Body of pancreas (tissue), 4 donors: ENCODE measurements at regions of chr16 and their contacts with region 1.

Region 1: GRCh38 chr16:3112058-3112880 is at the start of gene ZNF205:
- DNase-seq: peak; percentile 83 to 86 (median 86)
- ATAC-seq: peak; percentile 95
- H3K4me3 ChIP-seq: peak within 1 kb of the TSS; percentile 51 to 68
- H3K27ac ChIP-seq: peak within 1 kb of the TSS in 3 of 4 donors; percentile 38 to 69 (median 56)
- H3K4me1 ChIP-seq: peaks cover 31% of the 10 kb centered on the region
- H3K27me3 ChIP-seq: no peaks in the 10 kb centered on the region
- CTCF ChIP-seq: peak in 3 of 7 experiments; percentile 3 to 8 (median 8)
- POLR2A ChIP-seq: peak in 2 of 3 donors; percentile 30 to 48
- total RNA-seq, gene ZNF205: 14.2 to 20.0 TPM

Region 2: GRCh38 chr16:2926650-2927646 is 185.3 kb before region 1 on chr16:
- intact Hi-C with region 1: no loop called
- DNase-seq: peak; percentile 89 to 94 (median 90)
- ATAC-seq: peak; percentile 96
- H3K4me3 ChIP-seq: no peak overlapping the region
- H3K27ac ChIP-seq: no peak overlapping the region
- H3K4me1 ChIP-seq: peaks cover 5% of the 10 kb centered on the region
- H3K27me3 ChIP-seq: no peaks in the 10 kb centered on the region
- CTCF ChIP-seq: peak; percentile 86 to 98 (median 93)
- POLR2A ChIP-seq: no peak

Region 3: DNA sequence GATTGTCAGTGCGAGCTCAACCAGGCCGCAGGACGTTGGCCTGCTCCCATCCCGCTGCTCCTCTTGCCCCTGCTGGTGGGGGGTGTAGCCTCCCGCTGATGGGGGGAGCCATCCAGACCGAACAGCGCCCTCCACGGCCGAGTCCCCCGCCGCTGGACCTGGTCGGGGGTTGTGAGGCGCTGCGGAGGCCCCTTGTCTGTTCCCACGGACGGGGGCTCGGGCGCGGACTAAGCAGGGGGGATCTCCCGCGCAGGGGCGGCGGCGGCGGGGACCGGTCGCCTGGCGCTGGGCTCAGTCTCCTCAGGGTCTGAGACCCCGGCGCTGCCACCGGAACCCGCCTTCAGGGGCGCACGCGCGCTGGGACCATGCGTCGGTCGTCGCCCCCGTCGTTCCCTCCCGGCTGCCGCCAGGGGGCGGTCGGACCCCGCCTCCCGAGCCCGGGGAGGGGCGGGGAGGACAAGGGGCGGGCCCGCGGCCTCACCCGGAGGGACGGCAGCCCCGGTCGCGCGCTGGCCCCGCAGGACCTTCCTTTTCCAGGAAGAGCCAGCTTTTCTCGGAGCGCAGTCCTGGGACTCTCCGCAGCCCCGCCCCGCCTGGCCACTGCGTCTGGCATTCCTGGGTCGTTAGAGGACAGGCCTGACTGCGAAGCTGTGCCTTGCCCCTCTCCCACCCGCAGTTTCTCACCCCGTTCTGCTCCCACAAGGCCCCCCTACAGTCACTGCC is 53.1 kb before region 1 on chr16:
- intact Hi-C with region 1: loop called (anchors 10 kb)
- DNase-seq: peak; percentile 94 to 96 (median 96)
- ATAC-seq: peak; percentile 95
- H3K4me3 ChIP-seq: peak overlapping the region; percentile 42 to 78
- H3K27ac ChIP-seq: peak overlapping the region; percentile 86 to 94 (median 89)
- H3K4me1 ChIP-seq: peaks cover 26% of the 10 kb centered on the region
- H3K27me3 ChIP-seq: no peaks in the 10 kb centered on the region
- CTCF ChIP-seq: peak; percentile 77 to 99 (median 96)
- POLR2A ChIP-seq: peak; percentile 45 to 78 (median 77)

Region 4: DNA sequence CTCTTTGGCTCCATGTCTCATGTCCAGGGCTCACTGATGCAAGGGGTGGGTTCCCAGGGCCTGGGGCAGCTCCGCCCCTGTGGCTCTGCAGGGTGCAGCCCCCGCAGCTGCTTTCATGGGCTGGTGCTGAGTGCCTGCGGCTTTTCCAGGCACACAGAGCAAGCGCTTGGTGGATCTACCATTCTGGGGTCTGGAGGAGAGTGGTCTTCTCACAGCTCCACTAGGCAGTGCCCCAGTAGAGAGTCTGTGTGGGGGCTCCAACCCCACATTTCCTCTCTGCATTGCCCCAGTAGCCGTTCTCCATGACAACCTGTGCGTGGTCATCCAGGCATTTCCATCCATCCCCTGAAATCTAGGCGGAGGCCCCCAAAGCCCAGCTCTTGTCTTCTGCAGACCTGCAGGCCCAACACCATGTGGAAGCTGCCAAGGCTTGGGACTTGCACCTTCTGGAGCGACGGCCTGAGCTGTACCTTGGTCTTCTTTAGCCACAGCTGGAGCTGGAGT is 41.6 kb before region 1 on chr16:
- intact Hi-C with region 1: no loop called
- DNase-seq: no peak
- ATAC-seq: no peak
- H3K4me3 ChIP-seq: no peak overlapping the region
- H3K27ac ChIP-seq: no peak overlapping the region
- H3K4me1 ChIP-seq: peaks cover 28% of the 10 kb centered on the region
- H3K27me3 ChIP-seq: no peaks in the 10 kb centered on the region
- CTCF ChIP-seq: no peak
- POLR2A ChIP-seq: peak in 1 of 3 donors; percentile 9